ENCODE measurements at regions of chr2 and their contacts with region 1.

Region 1: DNA sequence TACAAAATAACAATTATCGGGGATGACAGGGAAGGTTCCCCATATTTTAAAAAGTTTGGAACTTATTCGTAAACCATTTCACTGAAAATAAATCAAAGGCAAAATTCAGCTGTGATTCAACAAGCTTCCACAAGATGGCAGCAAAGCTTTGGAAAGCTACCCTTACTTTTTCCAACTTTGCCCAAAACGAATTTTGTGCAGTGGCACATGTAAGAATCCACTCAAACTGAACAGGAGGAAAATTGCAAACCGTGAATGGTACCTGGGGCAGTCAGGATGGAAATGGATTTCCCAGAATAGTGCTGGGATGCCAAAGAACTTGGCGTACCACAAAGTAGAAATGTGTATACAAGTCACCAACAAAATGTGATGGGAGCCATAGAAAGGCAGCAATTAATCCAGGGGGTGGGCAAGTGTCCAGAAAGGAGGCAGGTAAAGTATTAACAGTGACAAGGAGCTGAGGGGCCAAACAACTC is 10.7 kb downstream of the RPL31 start:
- DNase-seq: peak; percentile 45
- ATAC-seq: peak; percentile 51; the same call in 1 of the 2 replicates
- H3K4me3 ChIP-seq: no peak overlapping the region
- H3K27ac ChIP-seq: no peak overlapping the region
- H3K4me1 ChIP-seq: 0 out of 2 replicates have a peak, but pooled peaks cover 2% of the 10 kb centered on the region
- H3K27me3 ChIP-seq: no peaks in the 10 kb centered on the region
- CTCF ChIP-seq: peak; percentile 79
- POLR2A ChIP-seq: no peak
- RAD21 ChIP-seq: peak; percentile 80

Region 2: DNA sequence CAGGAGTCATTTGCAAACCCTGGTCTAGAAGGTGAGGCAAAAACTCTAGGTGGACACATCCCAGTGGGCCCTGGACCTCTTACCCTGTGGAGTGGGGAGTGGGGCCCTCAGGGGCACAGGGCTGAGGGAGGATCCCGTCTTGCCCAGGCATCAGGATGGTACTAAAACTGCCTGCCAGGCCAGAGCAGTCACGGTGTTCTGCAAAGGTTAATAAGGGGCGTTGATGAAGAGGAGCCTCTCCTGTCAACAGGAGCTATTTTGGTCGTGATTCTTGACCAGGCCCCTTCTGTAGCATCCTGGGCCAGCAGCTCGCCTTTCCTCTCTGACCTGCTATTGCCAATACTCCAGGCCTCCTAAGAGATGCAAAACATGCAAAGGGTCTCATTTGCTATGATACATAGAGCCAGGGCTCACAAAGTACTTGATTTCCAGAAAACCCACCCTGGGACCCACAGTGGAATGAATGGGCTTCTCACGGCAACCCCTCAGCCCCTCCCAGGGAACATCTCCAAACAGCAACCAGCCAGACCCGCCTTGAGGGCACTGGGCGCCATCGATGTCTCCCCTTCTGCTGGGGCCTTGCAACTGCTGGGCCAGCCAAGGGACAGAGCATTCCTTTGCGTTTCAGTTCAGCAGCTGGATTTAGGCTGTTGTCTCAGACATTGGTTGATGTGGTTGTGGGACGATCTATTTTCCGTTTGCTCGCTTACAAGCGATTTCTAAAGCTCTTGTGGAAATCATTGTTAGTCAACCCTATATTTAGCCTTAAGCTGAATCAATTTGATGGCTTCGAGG is 338.9 kb before region 1 on chr2:
- CTCF ChIA-PET with region 1: no interaction called
- POLR2A ChIA-PET with region 1: interaction called, 11 read pairs
- dilution Hi-C with region 1: no loop called
- in situ Hi-C with region 1: no loop called
- intact Hi-C with region 1: no loop called
- DNase-seq: no peak
- ATAC-seq: no peak
- H3K4me3 ChIP-seq: no peak overlapping the region
- H3K27ac ChIP-seq: no peak overlapping the region
- H3K4me1 ChIP-seq: no peaks in the 10 kb centered on the region
- H3K27me3 ChIP-seq: peaks cover 42% of the 10 kb centered on the region
- CTCF ChIP-seq: no peak
- POLR2A ChIP-seq: no peak
- RAD21 ChIP-seq: no peak

Region 3: DNA sequence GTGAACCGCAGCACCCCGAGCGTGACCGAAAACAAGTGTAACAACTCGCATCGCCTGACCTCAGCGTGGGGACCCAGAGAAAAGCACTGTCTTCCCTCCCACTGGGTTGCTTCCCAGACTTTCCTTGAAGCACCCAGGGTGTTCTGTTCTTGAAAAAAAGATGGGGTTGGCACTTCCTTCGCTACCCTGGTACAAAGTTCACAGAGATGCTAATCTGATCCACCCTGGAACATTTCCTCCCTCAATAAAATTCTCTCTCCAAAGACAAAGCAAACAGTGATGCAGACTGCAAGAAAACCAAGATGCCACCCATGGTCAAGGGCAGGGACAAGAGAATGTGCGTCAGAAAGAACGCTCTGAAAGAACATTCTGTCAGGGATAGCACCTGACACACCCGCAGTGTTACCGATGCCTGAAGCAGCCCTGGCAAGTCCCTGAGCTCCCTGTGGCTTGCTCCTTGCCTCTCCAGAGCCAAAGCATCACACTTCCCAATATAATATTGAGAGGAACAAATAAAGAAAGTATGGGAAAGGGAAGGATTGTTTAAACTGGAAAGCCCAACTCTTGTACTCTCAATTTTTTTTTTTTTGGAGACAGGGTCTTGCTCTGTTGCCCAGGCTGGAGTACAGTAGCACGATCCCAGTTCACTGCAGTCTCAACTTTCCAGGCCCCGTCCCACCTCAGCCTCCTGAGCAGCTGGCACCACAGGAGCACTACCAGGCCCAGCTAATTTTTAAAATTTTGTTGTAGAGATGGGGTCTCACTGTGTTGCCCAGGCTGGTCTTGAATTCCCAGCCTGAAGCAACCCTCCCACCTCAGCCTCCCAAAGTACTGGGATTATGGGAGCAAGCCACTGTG is 67.7 kb after region 1 on chr2:
- CTCF ChIA-PET with region 1: no interaction called
- POLR2A ChIA-PET with region 1: no interaction called
- dilution Hi-C with region 1: no loop called
- in situ Hi-C with region 1: no loop called
- intact Hi-C with region 1: no loop called
- DNase-seq: no peak
- ATAC-seq: no peak
- H3K4me3 ChIP-seq: no peak overlapping the region
- H3K27ac ChIP-seq: no peak overlapping the region
- H3K4me1 ChIP-seq: no peaks in the 10 kb centered on the region
- H3K27me3 ChIP-seq: no peaks in the 10 kb centered on the region
- CTCF ChIP-seq: no peak
- POLR2A ChIP-seq: no peak
- RAD21 ChIP-seq: no peak

Region 4: DNA sequence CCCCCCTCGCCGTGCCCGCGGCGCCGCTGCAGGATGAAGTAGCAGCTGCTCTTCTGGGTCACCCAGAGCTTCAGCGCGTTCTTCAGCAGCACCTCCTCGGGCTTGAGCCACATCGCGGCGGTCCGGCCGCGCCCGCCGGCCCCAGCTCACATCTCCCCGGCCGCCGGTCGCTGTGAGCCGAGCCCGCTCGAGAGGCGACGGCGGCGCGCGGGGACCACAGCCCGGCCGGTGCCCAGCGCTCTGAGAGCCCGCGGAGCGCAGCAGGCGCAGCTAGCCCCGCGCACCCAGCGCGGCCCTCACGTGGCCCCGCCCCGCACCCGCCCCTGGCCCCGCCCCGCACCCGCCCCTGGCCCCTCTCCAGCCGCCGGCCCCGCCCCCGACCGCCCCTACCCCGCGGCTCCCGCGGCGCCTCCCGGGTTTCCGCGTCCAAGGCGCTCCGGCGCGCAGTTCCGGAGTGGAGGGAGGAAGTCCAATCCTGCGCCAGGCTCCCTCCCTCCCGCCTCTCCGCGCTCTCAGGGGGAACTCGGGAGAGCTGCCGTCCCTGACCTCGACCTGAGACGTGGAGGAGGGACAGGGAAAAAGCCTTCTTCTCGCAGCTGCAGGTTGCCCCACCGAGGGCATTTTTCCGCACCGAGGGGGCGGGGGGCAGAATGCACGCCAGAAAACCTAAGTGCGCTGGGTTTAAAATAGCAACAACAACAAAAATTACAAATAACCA is 138.6 kb after region 1 on chr2 and contains the start of gene TBC1D8:
- CTCF ChIA-PET with region 1: interaction called, 9 read pairs
- POLR2A ChIA-PET with region 1: no interaction called
- dilution Hi-C with region 1: no loop called
- in situ Hi-C with region 1: no loop called
- intact Hi-C with region 1: loop called (anchors 2 kb)
- DNase-seq: peak; percentile 68
- ATAC-seq: peak; percentile 95
- H3K4me3 ChIP-seq: peak within 1 kb of the TSS; percentile 77
- H3K27ac ChIP-seq: peak within 1 kb of the TSS; percentile 62
- H3K4me1 ChIP-seq: peaks cover 7% of the 10 kb centered on the region
- H3K27me3 ChIP-seq: peaks cover 7% of the 10 kb centered on the region; the same call in 1 of the 2 replicates
- CTCF ChIP-seq: no peak
- POLR2A ChIP-seq: no peak
- RAD21 ChIP-seq: no peak
- total RNA-seq, gene TBC1D8: 0.83 and 1.3 TPM in 2 replicates

Region 5: DNA sequence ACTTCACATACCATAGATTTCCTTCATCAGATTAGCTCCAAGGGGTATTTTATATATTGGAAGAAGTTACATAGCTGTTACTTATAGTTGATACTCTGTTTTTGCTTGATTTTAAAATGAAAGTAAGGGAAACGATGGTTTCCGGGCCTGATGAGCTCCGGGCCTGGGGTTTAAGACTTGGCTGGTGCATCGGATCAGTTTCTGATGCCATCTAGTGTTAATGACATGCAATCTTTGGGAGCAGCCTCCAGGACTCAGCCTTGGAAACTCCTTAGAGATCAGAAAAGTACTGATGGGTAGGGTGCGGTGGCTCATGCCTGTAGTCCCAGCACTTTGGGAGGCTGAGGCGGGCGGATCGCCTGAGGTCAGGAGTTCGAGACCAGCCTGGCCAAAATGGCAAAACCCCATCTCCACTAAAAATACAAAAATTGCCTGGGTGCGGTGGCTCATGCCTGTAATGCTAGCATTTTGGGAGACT is 192.8 kb after region 1 on chr2:
- CTCF ChIA-PET with region 1: interaction called, 19 read pairs
- POLR2A ChIA-PET with region 1: no interaction called
- dilution Hi-C with region 1: no loop called
- in situ Hi-C with region 1: loop called (anchors 5 kb)
- intact Hi-C with region 1: loop called (anchors 1 kb)
- DNase-seq: peak; percentile 80
- ATAC-seq: peak; percentile 99
- H3K4me3 ChIP-seq: no peak overlapping the region
- H3K27ac ChIP-seq: no peak overlapping the region
- H3K4me1 ChIP-seq: no peaks in the 10 kb centered on the region; the same call in 1 of the 2 replicates
- H3K27me3 ChIP-seq: no peaks in the 10 kb centered on the region
- CTCF ChIP-seq: peak; percentile 77
- POLR2A ChIP-seq: no peak
- RAD21 ChIP-seq: peak; percentile 75

Region 6: GRCh38 chr2:101252408-101253012 is 239.8 kb after region 1 on chr2 and contains the start of gene CNOT11:
- CTCF ChIA-PET with region 1: interaction called, 4 read pairs
- POLR2A ChIA-PET with region 1: no interaction called
- dilution Hi-C with region 1: no loop called
- in situ Hi-C with region 1: no loop called
- intact Hi-C with region 1: loop called (anchors 5 kb)
- DNase-seq: peak; percentile 98
- ATAC-seq: peak; percentile 95
- H3K4me3 ChIP-seq: peak within 1 kb of the TSS; percentile 84
- H3K27ac ChIP-seq: peak within 1 kb of the TSS; percentile 87
- H3K4me1 ChIP-seq: peaks cover 12% of the 10 kb centered on the region
- H3K27me3 ChIP-seq: no peaks in the 10 kb centered on the region
- CTCF ChIP-seq: no peak
- POLR2A ChIP-seq: peak; percentile 78; the same call in 1 of the 2 replicates
- RAD21 ChIP-seq: no peak
- total RNA-seq, gene CNOT11: 33.6 and 36.4 TPM in 2 replicates

Region 7: DNA sequence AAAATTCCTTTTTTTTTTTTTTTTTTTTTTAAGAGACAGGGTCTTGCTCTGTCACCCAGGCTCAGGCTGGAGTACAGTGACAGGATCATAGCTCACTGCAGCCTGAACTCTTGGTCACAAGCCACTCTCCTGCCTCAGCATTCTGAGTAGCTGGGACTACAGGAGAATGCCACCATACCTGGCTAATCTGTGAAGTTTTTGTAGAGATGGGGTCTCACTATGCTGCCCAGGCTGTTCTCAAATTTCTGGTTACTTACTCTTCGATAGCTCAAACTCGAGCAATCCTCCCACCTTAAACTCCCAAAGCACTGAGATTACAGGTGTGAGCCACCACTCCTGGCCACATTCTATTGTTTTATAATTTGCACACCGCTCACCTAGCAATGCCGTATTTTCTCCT is 268.7 kb after region 1 on chr2:
- CTCF ChIA-PET with region 1: no interaction called
- POLR2A ChIA-PET with region 1: interaction called, 21 read pairs
- dilution Hi-C with region 1: no loop called
- in situ Hi-C with region 1: no loop called
- intact Hi-C with region 1: no loop called
- DNase-seq: no peak
- ATAC-seq: no peak
- H3K4me3 ChIP-seq: no peak overlapping the region
- H3K27ac ChIP-seq: no peak overlapping the region
- H3K4me1 ChIP-seq: no peaks in the 10 kb centered on the region
- H3K27me3 ChIP-seq: no peaks in the 10 kb centered on the region
- CTCF ChIP-seq: no peak
- POLR2A ChIP-seq: no peak
- RAD21 ChIP-seq: no peak